ENCODE measurements at regions of chr3 and their contacts with region 1.

Region 1: GRCh38 chr3:100047455-100048141 is 66.7 kb downstream of the FILIP1L start:
- DNase-seq: no peak
- H3K4me3 ChIP-seq: no peak overlapping the region
- H3K27ac ChIP-seq: no peak overlapping the region
- H3K4me1 ChIP-seq: no peaks in the 10 kb centered on the region
- H3K27me3 ChIP-seq: no peaks in the 10 kb centered on the region
- CTCF ChIP-seq: no peak
- POLR2A ChIP-seq: peak; percentile 5

Region 2: DNA sequence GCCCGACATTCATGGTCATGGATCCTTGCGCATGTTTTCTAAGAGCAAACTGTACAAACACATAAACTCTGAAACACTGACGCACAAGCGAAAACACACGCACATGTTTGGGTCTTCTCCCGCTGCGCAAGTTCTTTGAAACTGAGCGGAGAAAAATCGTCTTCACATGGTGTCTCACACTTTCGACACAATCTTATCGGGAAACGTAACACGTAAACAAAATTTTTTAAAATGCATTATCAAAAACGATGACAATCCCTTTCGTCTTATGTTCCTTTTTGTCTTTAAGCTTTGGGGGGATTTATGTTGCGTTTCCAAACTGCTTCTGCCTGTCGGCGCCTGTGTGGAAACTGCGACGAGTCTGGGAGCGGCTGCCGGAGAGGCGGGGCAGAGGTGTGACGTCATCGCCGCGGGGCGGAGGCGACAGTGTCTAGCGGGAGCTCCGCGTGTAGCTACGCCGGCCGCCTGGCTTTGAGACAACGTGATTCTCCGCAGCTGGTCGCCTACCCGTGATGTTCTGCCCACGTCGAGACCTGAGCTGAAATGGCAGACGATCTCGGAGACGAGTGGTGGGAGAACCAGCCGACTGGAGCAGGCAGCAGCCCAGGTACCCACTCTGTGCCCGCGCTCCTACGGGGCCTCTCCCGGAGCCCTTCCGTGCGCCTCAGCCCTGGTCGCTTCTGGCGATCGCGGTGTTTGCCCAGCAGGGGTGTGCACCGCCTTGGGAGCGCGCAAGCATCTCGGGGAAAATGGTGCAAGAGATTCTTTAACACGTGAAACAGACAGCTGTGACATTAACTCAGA is 230.0 kb before region 1 on chr3 and contains the start of gene CMSS1:
- intact Hi-C with region 1: no loop called
- DNase-seq: peak; percentile 93
- H3K4me3 ChIP-seq: peak within 1 kb of the TSS; percentile 59 to 65
- H3K27ac ChIP-seq: peak within 1 kb of the TSS; percentile 79 to 84
- H3K4me1 ChIP-seq: no peaks in the 10 kb centered on the region
- H3K27me3 ChIP-seq: no peaks in the 10 kb centered on the region
- CTCF ChIP-seq: peak in 3 of 4 experiments; percentile 20 to 41 (median 23)
- POLR2A ChIP-seq: peak; percentile 46
- total RNA-seq, gene CMSS1: 10.2 to 13.6 TPM

Region 3: GRCh38 chr3:99875929-99876841 is 171.4 kb before region 1 on chr3:
- intact Hi-C with region 1: loop called (anchors 5 kb)
- DNase-seq: peak; percentile 63
- H3K4me3 ChIP-seq: peak overlapping the region; percentile 40 to 45
- H3K27ac ChIP-seq: peak overlapping the region; percentile 73 to 83
- H3K4me1 ChIP-seq: no peaks in the 10 kb centered on the region
- H3K27me3 ChIP-seq: no peaks in the 10 kb centered on the region
- CTCF ChIP-seq: no peak
- POLR2A ChIP-seq: peak; percentile 83

Region 4: DNA sequence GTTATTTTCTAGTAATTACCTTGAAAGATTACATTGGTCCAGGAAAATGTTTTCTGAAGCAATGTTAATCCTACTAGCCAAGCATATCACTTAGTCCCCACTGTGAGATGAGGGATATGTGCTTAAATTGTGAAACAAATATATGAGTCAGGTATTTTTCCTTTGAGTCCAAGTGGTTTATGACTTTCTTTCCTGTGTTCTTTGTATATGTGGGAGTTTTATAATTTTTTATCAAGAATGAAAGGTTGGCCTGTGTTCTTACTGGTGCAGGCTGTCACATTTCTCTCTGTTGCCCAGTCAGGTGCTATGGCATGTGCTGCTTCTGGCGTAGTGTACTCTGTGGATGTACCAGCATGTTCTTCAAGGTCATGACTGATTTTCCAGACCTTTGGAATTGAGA is 82.5 kb before region 1 on chr3:
- intact Hi-C with region 1: loop called (anchors 5 kb)
- DNase-seq: no peak
- H3K4me3 ChIP-seq: no peak overlapping the region
- H3K27ac ChIP-seq: no peak overlapping the region
- H3K4me1 ChIP-seq: no peaks in the 10 kb centered on the region
- H3K27me3 ChIP-seq: no peaks in the 10 kb centered on the region
- CTCF ChIP-seq: no peak
- POLR2A ChIP-seq: no peak

Measured in prostate gland (tissue), 2 donors.